ENCODE measurements at regions of chr6 and their contacts with region 1.

Region 1: DNA sequence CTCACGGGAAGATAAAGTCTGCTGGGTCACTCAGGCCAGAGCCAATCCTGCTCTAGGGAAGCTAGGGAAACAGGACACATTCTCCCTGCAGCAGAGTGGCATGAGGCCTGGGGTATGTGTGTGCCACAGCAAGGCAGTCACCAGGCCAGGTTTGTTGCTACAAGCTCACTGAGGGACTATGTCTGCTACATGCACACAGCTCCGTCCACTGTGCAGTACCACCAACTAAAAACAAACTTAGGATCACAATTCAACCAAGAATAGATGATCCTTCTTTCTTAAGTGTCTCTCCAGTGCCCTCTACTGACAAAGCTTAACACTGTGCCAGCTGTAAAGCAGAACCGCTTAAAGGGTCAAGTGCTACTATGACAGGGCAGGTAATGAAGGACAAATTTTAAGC is 192.5 kb downstream of the PTPRK start:
- DNase-seq: peak; percentile 32 to 57 (median 50)
- H3K4me3 ChIP-seq: no peak overlapping the region
- H3K4me3 Mint-ChIP-seq: no peak overlapping the region
- H3K27ac ChIP-seq: no peak overlapping the region
- H3K27ac Mint-ChIP-seq: no peak overlapping the region
- H3K4me1 ChIP-seq: no peaks in the 10 kb centered on the region
- H3K4me1 Mint-ChIP-seq: peaks cover 0 to 2% (median 0%) of the 10 kb centered on the region in 4 donors
- H3K27me3 ChIP-seq: no peaks in the 10 kb centered on the region
- H3K27me3 Mint-ChIP-seq: no peaks in the 10 kb centered on the region

Region 2: GRCh38 chr6:127606131-127606562 is 721.7 kb before region 1 on chr6:
- CTCF ChIA-PET with region 1: no interaction called
- POLR2A ChIA-PET with region 1: no interaction called
- intact Hi-C with region 1: loop called (anchors 1 kb)
- DNase-seq: peak in 2 of 5 donors; percentile 3 to 6
- H3K4me3 ChIP-seq: no peak overlapping the region
- H3K4me3 Mint-ChIP-seq: no peak overlapping the region
- H3K27ac ChIP-seq: no peak overlapping the region
- H3K27ac Mint-ChIP-seq: no peak overlapping the region
- H3K4me1 ChIP-seq: no peaks in the 10 kb centered on the region
- H3K4me1 Mint-ChIP-seq: no peaks in the 10 kb centered on the region
- H3K27me3 ChIP-seq: no peaks in the 10 kb centered on the region
- H3K27me3 Mint-ChIP-seq: peaks cover 1 to 2% of the 10 kb centered on the region in 2 donors